Activated T-helper 2 cell treated with anti-CD3 and anti-CD28 coated beads, Interferon-gamma antibody, Interleukin-2, Interleukin-4, amounts not matched to agents 10 μg/mL and 5 μg/mL and 100 μg/mL, durations not matched to agents 14 hours and 24 hours and 36 hours (primary cell): ENCODE measurements at regions of chr12 and their contacts with region 1.

Region 1: DNA sequence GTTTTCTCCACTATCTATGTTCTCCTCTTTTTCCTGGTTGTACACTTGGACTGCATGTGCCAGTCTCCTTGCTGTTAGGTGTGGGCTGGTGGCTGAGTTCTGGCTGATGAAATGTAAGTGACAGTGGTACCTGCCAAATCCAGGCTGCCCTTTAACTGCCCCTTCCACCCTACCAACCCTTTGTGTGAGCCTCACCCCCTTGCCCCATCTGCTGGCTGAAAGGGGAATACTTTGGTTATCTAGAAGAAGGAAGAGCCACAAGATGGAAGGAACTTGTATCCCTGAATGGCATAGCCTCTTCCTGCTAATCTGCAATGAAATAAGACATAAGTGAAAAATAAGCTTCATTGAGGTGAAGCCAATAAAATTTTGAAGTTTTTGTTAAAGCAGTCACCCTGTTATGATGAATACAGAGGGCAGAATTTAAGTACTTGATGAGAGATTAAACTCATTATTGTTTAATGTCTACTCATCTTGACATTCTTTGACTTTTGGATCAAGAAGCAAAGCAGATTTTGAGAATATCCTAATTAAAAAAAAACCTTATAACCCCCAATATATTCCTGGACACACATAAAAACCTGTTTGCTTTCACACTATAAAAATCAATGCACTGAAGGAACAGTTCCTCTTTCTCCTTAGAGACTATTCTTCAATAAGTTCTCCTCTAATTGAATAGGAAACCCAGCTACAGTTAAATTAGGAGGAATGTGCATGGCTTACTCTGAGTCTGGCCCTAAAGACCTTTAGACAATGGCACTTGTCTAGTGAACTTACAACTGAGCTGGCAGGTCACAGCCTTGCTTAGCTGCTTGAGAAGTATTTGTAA is 262.6 kb upstream of the BTG1 start:
- DNase-seq: peak; percentile 32
- H3K4me3 Mint-ChIP-seq: no peak overlapping the region
- H3K27ac Mint-ChIP-seq: no peak overlapping the region
- H3K4me1 Mint-ChIP-seq: peaks cover 41% of the 10 kb centered on the region
- H3K27me3 Mint-ChIP-seq: no peaks in the 10 kb centered on the region

Region 2: GRCh38 chr12:91687052-91688017 is 721.0 kb before region 1 on chr12:
- intact Hi-C with region 1: loop called (anchors 5 kb)
- DNase-seq: no peak
- H3K4me3 Mint-ChIP-seq: no peak overlapping the region
- H3K27ac Mint-ChIP-seq: peak overlapping the region; percentile 66
- H3K4me1 Mint-ChIP-seq: peaks cover 24% of the 10 kb centered on the region
- H3K27me3 Mint-ChIP-seq: no peaks in the 10 kb centered on the region

Region 3: DNA sequence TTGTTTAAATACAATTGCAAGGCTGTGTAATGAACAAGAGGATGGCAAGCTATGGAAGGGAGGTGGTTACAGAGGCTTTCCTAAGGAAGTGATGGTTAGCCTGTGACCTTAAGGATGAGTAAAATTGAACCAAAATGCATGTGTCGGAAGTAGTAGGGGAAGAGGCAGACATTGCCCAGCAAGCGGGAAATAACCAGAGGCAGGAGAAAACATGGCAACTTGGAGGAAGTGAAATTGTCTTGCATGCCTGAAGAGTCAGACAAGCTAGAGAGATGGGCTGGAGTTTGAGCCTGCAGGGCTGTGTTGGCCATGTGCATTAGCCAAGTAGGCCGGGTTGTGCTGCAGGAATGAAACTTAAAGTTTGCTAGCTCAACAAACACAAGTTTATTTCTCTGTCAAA is 358.9 kb before region 1 on chr12:
- intact Hi-C with region 1: loop called (anchors 10 kb)
- DNase-seq: no peak
- H3K4me3 Mint-ChIP-seq: no peak overlapping the region
- H3K27ac Mint-ChIP-seq: no peak overlapping the region
- H3K4me1 Mint-ChIP-seq: peaks cover 71% of the 10 kb centered on the region
- H3K27me3 Mint-ChIP-seq: no peaks in the 10 kb centered on the region

Region 4: GRCh38 chr12:92341065-92341668 is 67.1 kb before region 1 on chr12:
- intact Hi-C with region 1: loop called (anchors 10 kb)
- DNase-seq: no peak
- H3K4me3 Mint-ChIP-seq: peak overlapping the region; percentile 52
- H3K27ac Mint-ChIP-seq: no peak overlapping the region
- H3K4me1 Mint-ChIP-seq: peaks cover 14% of the 10 kb centered on the region
- H3K27me3 Mint-ChIP-seq: no peaks in the 10 kb centered on the region

Region 5: GRCh38 chr12:92505254-92506231 is 97.3 kb after region 1 on chr12:
- intact Hi-C with region 1: loop called (anchors 1 kb)
- DNase-seq: peak; percentile 36
- H3K4me3 Mint-ChIP-seq: peak overlapping the region; percentile 70
- H3K27ac Mint-ChIP-seq: peak overlapping the region; percentile 89
- H3K4me1 Mint-ChIP-seq: peaks cover 47% of the 10 kb centered on the region
- H3K27me3 Mint-ChIP-seq: no peaks in the 10 kb centered on the region